Activated CD4-positive, alpha-beta memory T cell treated with anti-CD3 and anti-CD28 coated beads for 36 hours (primary cell): ENCODE measurements at regions of chr16 and their contacts with region 1.

Region 1: GRCh38 chr16:29805378-29806098 is 791 bp upstream of the MAZ start:
- DNase-seq: peak; percentile 99
- H3K4me3 Mint-ChIP-seq: peak overlapping the region; percentile 92
- H3K27ac Mint-ChIP-seq: peak overlapping the region; percentile 97
- H3K4me1 Mint-ChIP-seq: peaks cover 39% of the 10 kb centered on the region
- H3K27me3 Mint-ChIP-seq: no peaks in the 10 kb centered on the region

Region 2: DNA sequence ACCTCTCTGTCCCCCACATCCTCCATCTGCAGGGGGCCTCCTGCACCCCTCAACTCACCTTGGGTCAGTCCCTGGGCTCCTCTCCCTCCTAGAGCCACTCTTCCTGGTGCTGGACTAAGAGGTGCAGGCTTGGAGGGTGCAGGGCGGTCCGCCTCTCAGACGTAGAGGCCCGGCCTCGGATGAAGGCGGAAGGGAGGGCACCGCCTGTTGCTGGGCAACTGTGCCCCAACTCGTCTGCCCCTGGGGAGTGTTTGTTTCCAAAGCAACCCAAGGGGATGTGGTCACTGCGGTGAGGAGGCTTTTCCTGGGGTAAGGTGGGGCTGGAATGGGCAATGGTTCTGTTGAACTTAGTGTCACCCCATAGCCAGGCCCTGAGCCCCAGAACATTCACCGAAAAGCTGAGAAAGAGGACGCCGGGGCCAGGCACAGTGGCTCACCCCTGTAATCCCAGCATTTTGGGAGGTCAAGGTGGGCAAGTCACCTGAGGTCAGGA is 59.6 kb before region 1 on chr16 and contains the start of gene C16orf54:
- CTCF ChIA-PET with region 1: interaction called, 4 read pairs
- POLR2A ChIA-PET with region 1: interaction called, 6 read pairs
- intact Hi-C with region 1: loop called (anchors 2 kb)
- DNase-seq: peak; percentile 97
- H3K4me3 Mint-ChIP-seq: peak within 1 kb of the TSS; percentile 97
- H3K27ac Mint-ChIP-seq: peak within 1 kb of the TSS; percentile 98
- H3K4me1 Mint-ChIP-seq: peaks cover 60% of the 10 kb centered on the region
- H3K27me3 Mint-ChIP-seq: no peaks in the 10 kb centered on the region
- total RNA-seq, gene C16orf54: 25.2 to 26.2 TPM

Region 3: GRCh38 chr16:29815793-29816693 is 10.5 kb after region 1 on chr16 and contains the start of gene PAGR1:
- CTCF ChIA-PET with region 1: interaction called, 38 read pairs
- POLR2A ChIA-PET with region 1: interaction called, 84 read pairs
- intact Hi-C with region 1: loop called (anchors 1 kb)
- DNase-seq: peak; percentile 99
- H3K4me3 Mint-ChIP-seq: peak within 1 kb of the TSS; percentile 98
- H3K27ac Mint-ChIP-seq: peak within 1 kb of the TSS; percentile 90
- H3K4me1 Mint-ChIP-seq: peaks cover 41% of the 10 kb centered on the region
- H3K27me3 Mint-ChIP-seq: no peaks in the 10 kb centered on the region
- total RNA-seq, gene PAGR1: 21.9 to 24.0 TPM

Region 4: GRCh38 chr16:29862884-29863668 is 57.5 kb after region 1 on chr16 and contains the start of gene CDIPT:
- CTCF ChIA-PET with region 1: interaction called, 3 read pairs
- POLR2A ChIA-PET with region 1: no interaction called
- intact Hi-C with region 1: loop called (anchors 2 kb)
- DNase-seq: peak; percentile 95
- H3K4me3 Mint-ChIP-seq: peak within 1 kb of the TSS; percentile 94
- H3K27ac Mint-ChIP-seq: peak within 1 kb of the TSS; percentile 92
- H3K4me1 Mint-ChIP-seq: peaks cover 18% of the 10 kb centered on the region
- H3K27me3 Mint-ChIP-seq: no peaks in the 10 kb centered on the region
- total RNA-seq, gene CDIPT: 39.5 to 43.9 TPM

Region 5: GRCh38 chr16:29973384-29974246 is 168.1 kb after region 1 on chr16 and contains the start of gene TAOK2:
- CTCF ChIA-PET with region 1: interaction called, 3 read pairs
- POLR2A ChIA-PET with region 1: no interaction called
- intact Hi-C with region 1: loop called (anchors 1 kb)
- DNase-seq: peak; percentile 98
- H3K4me3 Mint-ChIP-seq: peak within 1 kb of the TSS; percentile 89
- H3K27ac Mint-ChIP-seq: peak within 1 kb of the TSS; percentile 86
- H3K4me1 Mint-ChIP-seq: peaks cover 34% of the 10 kb centered on the region
- H3K27me3 Mint-ChIP-seq: no peaks in the 10 kb centered on the region
- total RNA-seq, gene TAOK2: 27.2 to 28.2 TPM

Region 6: DNA sequence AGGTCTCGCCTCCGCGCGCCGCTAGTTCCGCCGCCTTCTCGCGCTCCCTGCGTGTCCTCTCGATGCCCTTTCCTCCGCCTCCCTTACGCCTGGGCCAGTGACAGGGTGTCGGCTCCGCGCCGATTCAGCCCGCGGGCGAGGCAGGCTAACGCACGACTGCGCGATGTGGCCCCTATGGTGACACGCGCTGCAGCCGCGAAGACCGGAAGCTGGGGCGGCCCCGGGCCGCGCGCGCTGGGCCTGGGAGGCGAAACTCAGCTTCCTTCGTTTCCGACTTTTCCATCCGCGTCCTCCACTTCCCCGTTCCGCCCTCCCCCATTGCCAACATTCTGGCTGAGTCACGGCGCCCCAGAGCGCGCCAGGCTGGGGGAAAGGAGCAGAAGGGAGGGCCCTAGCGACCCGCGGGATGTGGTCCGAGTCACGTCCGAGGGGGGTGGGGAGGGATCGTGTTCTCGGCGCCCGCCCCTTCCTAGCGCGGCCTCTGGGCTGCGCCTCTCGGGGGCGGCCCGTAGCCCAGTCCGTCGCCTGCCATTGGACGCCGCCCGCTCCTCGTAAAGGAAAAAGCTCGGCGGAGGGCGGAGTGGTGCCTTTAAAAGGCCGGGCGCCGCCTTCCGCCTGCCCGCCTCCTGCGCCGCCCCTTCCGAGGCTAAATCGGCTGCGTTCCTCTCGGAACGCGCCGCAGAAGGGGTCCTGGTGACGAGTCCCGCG is 259.8 kb after region 1 on chr16 and contains the start of gene ALDOA:
- CTCF ChIA-PET with region 1: no interaction called
- POLR2A ChIA-PET with region 1: interaction called, 3 read pairs
- intact Hi-C with region 1: loop called (anchors 5 kb)
- DNase-seq: peak; percentile 98
- H3K4me3 Mint-ChIP-seq: peak within 1 kb of the TSS; percentile 97
- H3K27ac Mint-ChIP-seq: peak within 1 kb of the TSS; percentile 99
- H3K4me1 Mint-ChIP-seq: peaks cover 34% of the 10 kb centered on the region
- H3K27me3 Mint-ChIP-seq: no peaks in the 10 kb centered on the region
- total RNA-seq, gene ALDOA: 1,724 to 1,734 TPM

Region 7: DNA sequence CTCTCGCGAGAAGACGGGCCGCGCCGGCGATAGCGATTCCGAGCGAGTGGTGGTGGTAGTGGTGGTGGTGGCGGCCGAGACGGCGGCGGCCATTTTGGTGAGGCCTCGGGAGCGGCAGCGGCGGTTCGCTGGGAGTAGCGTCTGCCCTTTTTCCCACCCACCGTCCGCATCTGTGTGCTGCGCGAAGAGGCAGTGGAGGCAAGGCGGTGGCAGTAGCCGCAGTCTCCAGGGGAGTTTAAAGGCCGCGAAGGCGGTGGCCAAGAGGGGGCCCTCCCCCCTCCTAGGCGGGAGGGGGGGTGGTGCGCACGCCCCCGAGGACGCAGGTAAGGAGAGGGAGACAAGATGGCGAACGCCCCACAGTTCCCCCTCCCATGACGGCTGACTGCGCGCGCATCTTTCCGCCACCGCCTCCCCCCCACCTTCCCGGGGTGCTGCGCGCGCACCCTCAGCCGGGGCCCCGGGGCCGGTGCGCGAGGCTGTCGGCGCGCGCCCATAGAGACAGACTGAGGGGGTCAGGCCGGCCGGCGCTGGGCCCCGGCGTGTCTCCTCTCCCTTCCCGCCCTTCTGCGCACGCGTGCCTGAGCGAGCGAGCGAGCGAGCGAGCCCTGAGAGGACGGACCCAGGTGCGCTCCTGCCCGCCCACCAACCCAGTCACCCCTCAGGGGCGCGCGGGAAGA is 892.7 kb after region 1 on chr16:
- CTCF ChIA-PET with region 1: no interaction called
- POLR2A ChIA-PET with region 1: no interaction called
- intact Hi-C with region 1: loop called (anchors 5 kb)
- DNase-seq: peak; percentile 99
- H3K4me3 Mint-ChIP-seq: peak overlapping the region; percentile 96
- H3K27ac Mint-ChIP-seq: peak overlapping the region; percentile 99
- H3K4me1 Mint-ChIP-seq: peaks cover 29% of the 10 kb centered on the region
- H3K27me3 Mint-ChIP-seq: no peaks in the 10 kb centered on the region